ENCODE measurements at regions of chr12 and their contacts with region 1.

Region 1: DNA sequence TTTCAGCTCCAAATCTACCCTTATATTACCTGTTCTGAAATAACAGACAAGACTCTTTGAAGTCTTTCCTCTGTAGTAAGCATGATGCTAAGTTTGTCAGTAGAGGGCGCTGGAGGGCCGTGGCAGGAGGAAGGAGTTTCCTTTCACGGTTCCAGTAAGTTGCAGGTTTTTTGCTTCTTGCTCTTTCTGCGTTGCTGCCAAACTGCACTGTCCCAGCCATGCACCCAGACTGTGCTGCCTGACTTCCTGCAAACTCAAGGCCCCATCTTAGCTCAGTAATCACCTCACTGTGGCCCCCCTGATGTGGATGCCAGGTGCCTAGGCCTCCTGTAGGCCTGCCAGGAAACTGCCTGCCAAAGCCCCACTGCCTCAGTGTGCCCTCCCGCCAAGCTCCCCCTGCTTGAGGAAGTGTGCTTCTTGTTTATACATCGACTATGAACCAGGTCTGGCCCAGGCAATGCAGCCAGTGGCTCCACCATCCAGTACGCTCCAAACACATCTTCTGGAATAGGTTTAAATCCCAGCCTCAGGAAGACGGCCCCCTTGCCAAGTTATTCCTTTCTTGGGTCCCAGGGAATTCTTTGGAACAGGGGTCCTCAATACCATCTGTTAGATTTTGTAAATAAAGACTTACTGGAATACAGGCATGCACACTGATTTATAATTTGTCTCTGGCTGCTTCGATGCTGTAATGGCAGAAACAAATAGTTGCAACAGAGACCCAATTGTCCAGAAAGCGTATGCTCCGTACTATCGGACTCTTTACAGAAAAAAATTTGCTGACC is 193.7 kb upstream of the LRIG3 start:
- DNase-seq: peak; percentile 90
- H3K4me3 Mint-ChIP-seq: no peak overlapping the region
- H3K27ac Mint-ChIP-seq: no peak overlapping the region
- H3K4me1 Mint-ChIP-seq: no peaks in the 10 kb centered on the region
- H3K27me3 Mint-ChIP-seq: no peaks in the 10 kb centered on the region

Region 2: DNA sequence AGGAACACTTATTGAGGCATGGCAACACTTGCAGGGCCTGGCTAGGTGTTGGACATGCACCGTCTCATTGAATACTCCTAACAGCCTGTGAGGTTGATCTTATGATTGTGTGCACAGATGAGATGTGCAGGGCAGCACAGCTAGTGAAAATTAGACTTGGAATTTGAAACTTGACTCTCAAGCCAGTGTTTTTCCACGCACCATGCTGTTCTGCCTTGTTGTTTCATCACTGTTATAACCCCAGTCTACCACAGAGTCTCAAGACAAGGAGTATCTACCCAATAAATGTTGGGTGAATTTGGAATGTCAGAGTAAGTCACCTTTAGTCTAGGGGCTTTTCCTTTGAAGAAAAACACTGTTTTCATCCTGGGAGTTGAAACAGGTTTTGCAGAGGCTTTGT is 137.9 kb before region 1 on chr12:
- intact Hi-C with region 1: no loop called
- DNase-seq: no peak
- H3K4me3 Mint-ChIP-seq: no peak overlapping the region
- H3K27ac Mint-ChIP-seq: no peak overlapping the region
- H3K4me1 Mint-ChIP-seq: no peaks in the 10 kb centered on the region
- H3K27me3 Mint-ChIP-seq: no peaks in the 10 kb centered on the region

Region 3: DNA sequence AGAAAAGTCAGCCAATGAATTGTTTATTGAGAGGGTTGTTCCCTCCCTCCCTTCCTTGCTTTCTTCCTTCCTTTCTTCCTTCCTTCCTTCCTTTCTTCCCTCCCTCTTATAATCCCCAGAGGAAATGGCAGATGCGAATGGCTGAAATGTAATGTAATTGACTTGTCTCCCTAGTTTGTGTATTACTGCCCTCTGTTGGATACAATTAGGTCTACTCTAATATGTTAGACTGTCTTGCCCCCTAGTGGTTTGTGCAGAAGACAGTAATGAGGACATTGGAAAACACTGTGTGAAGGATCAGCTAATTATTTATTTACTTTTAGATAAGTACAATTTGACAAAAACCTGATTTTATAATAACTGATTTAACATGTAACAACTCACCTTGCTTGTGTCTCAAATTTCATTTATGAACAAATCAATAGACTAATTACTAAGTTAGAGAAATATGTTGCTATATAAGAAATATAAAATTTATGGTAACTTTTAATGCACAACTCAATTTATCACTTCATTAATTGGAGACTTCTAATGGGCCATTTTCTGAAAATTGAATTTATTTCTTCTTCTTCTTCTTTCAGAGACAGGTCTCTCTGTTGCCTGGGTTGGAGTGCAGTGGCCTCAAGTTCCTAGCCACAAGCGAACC is 36.1 kb after region 1 on chr12:
- intact Hi-C with region 1: loop called (anchors 1 kb)
- DNase-seq: peak; percentile 75
- H3K4me3 Mint-ChIP-seq: no peak overlapping the region
- H3K27ac Mint-ChIP-seq: no peak overlapping the region
- H3K4me1 Mint-ChIP-seq: no peaks in the 10 kb centered on the region
- H3K27me3 Mint-ChIP-seq: no peaks in the 10 kb centered on the region

Region 4: DNA sequence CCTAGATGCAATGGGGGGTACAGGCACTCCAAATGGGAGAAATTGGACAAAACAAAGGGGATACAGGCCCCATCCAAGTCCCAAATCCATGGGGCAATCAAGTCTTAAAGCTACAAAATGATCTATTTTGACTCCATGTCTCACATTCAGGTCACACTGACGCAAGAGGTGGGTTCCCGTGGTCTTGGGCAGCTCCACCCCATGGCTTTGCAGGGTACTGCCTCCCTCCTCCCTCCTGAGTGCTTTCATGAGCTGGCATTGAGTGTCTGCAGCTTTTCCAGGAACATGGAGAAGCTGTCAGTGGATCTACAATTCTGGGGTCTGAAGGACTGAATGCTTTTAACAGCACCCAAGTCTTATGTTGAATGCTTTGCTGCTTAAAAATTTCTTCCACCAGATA is 80.8 kb after region 1 on chr12:
- intact Hi-C with region 1: no loop called
- DNase-seq: no peak
- H3K4me3 Mint-ChIP-seq: no peak overlapping the region
- H3K27ac Mint-ChIP-seq: no peak overlapping the region
- H3K4me1 Mint-ChIP-seq: no peaks in the 10 kb centered on the region
- H3K27me3 Mint-ChIP-seq: no peaks in the 10 kb centered on the region